ENCODE measurements at regions of chr6 and their contacts with region 1.

Region 1: DNA sequence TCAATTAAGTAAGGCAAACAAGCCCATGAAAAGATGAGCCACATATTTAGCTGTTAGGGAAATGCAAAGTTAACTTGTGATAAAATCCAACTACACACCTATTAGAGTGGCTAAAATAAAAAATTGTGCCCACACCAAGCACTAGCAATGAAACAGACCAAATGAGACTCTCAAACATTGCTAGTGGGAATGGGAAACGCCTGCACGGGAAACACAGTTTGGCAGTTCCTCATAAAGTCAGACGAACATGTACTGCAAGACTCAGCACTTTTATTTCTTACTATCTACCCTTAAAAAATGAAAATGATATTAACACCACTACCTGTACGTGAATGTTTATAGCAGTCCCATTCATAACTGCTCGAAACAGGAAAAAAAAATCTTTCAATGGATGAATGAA is 392.1 kb upstream of the NOX3 start:
- DNase-seq: no peak

Region 2: DNA sequence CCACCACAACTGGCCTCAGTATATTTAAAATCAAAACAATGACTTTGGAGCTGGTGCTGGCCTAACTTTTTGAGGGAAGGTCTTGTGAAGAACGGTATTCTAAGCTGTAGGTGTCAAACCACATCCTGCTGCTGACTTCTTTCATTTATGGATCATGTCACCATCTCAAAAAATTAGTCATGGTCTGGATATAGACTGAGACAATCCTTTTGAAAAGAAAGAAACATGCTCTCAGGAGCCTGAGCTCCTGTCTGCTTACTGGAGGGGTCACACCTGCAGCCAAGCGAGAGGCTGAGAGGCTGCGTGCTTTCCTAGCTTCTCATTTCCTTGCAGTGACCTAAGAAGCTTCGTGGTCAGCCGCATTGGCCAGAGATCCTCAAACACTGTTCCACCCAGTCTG is 797.4 kb before region 1 on chr6:
- intact Hi-C with region 1: no loop called
- DNase-seq: no peak

Region 3: DNA sequence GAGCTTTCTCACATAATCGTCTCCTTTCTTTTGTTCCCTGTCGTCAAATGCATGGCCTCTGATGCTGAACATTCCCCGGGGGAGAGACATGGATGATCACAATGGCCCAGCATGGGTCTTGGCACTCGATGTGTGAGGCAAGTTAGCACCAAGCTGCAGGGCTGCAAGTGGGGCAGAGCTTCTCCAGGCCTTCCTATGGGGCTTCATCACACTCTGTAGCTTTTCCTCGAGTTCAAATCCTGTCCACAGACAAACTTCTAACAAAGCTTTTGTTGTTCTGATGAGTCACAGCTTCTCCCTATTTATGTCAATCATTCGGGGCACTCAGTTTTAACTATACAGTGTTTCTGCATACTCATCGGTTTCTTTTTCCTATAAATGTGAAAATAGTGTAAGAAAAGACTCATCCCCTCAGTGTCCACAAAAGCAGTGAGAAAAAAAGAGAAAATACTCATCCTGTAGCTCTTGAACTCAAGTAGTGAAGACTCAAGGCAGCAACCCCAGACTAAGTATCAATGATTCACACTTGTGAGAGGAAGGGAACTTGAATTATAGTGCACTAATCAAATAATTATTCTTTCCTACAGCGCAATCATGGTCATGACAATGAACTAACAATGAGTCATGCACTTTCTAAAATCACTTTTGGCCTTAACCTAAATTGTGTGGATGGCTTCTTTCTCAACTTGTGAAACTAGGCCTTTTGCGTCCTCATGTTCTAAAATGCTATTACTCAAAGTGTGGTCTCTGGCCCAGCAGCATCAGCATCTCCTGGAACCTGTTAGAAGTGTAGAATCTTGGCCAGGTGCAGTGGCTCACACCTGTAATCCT is 323.7 kb before region 1 on chr6:
- intact Hi-C with region 1: no loop called
- DNase-seq: no peak

Region 4: DNA sequence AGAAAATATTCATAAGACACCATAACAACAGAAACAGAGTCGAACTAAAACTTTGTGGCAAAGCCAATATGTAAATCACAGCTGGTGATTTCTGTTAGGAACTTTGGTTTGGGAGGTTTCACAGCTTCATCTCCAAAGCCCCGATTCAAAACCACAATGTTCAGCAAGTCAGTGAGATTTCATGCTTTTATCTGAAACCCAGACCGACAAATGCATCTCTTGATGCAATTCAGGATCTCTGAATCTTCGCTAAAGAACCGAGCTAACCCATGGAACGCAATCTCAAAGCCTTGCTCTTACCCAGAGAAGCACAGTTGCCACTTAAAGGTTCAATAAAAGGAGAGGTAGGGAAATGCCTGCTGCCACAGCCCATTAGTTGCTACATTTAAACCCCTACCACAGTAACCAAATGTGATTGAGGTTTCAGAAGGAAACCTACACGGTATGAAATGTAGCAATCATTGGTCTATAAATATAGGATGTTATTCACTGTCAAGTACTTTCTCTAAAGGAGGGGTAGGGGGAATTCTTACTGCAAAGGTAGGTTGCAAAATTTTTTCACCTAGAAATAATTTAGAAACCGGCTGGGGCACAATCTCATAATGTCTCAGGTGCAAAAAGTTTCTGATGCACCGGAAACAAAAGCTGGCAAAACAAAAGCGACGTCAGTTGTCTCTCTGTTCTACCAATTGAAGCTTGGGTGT is 548.5 kb after region 1 on chr6:
- intact Hi-C with region 1: no loop called
- DNase-seq: no peak

Region 5: DNA sequence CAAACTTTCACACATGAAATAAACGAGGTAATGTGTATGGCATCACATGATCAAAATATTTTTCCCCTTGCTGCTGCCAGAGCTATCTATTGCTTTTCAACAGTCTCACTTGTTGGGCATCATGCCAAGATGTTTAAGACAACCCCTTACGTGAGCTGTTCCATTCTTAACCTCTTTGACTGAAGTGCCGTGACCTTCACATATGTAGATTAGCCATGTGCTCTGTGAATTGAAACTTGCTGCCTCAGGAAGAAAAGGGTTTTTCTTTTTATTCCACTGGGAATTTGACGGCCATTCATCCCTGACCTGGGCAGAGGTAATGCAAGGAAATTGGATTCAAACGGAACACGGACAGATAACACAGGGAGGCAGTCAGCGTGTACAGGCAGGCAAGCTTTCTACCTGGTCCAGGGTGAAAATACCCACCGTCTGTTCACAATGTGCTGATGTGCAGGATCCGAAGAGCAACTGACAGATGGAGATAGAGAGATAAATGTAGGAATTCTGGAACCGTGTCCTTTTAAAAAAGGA is 943.7 kb after region 1 on chr6:
- intact Hi-C with region 1: loop called in 1 of 2 experiments (anchors 10 kb)
- DNase-seq: no peak